BJ (cell line): ENCODE measurements at regions of chr19 and their contacts with region 1.

Region 1: GRCh38 chr19:50784710-50785109 is 5.5 kb upstream of the ACP4 start:
- DNase-seq: no peak
- H3K4me3 ChIP-seq: no peak overlapping the region
- H3K27me3 ChIP-seq: peaks cover 3% of the 10 kb centered on the region
- CTCF ChIP-seq: no peak

Region 2: GRCh38 chr19:50537762-50538230 is 246.9 kb before region 1 on chr19:
- CTCF ChIA-PET with region 1: interaction called, 30 read pairs
- POLR2A ChIA-PET with region 1: no interaction called
- DNase-seq: peak; percentile 7
- H3K4me3 ChIP-seq: no peak overlapping the region
- H3K27me3 ChIP-seq: no peaks in the 10 kb centered on the region
- CTCF ChIP-seq: peak; percentile 84

Region 3: GRCh38 chr19:50580970-50581634 is 203.6 kb before region 1 on chr19:
- CTCF ChIA-PET with region 1: no interaction called
- POLR2A ChIA-PET with region 1: no interaction called
- DNase-seq: no peak
- H3K4me3 ChIP-seq: no peak overlapping the region
- H3K27me3 ChIP-seq: no peaks in the 10 kb centered on the region
- CTCF ChIP-seq: no peak

Region 4: DNA sequence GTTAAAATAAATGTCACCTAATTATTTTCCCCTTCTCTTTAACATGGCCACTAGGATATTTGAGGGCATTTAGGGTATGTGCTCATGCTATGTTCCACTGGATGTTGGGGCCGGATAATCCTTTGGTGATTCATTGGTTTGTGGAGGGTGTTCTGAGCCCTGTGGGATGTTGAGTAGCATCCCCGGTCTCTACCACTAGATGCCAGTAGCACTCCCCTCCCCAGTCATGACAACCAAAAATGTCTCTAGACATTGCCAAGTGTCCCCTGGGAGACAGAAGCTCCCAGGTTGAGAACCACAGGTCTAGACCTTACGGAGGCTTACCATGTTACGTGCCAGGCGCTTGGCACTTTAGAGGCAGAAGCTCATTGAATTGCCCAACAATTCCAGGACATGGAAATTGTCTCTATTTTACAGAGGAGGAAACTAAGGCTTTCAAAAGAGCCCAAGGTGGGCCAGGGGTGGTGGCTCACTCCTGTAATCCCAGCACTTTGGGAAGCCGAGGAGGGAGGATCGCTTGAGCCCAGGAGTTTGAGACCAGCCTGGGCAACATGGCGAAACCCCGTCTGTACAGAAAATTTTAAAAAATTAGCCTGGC is 79.2 kb before region 1 on chr19:
- CTCF ChIA-PET with region 1: interaction called, 17 read pairs
- POLR2A ChIA-PET with region 1: no interaction called
- DNase-seq: no peak
- H3K4me3 ChIP-seq: no peak overlapping the region
- H3K27me3 ChIP-seq: no peaks in the 10 kb centered on the region
- CTCF ChIP-seq: peak; percentile 90